ENCODE measurements at regions of chr2 and their contacts with region 1.

Region 1: DNA sequence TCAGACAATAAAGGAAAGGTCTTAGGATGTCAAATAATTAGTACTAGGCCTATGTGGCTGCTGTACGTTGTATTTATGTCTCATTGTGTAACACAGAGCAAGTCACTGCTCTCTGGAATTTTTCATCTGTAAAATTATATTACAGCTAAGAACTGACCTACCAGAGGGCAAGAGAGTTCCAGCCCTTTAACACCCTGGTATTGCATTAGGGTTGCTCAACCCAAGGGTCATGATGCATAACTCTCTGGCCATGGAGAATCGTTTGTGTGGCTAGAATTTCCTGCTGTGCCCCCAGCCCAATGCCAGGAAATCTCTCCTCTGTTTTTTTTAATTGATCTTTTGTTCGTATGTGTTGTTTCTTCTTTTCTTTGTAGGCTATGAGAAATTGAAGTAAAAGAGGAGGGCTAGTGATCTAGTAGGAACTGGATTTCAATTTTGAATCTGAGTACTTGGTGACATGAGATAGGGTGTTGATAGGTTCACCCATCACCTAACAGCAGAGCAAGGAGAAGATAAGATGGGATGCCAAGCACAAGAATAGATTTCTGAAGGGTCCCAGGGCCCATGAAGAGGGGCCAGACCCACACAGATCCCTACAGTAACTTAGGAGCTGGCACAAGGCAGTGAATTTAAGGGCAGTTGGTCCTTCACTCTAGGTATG is 571.2 kb upstream of the TNP1 start:
- DNase-seq: no peak
- H3K4me3 ChIP-seq: no peak overlapping the region
- H3K27ac ChIP-seq: no peak overlapping the region
- H3K4me1 ChIP-seq: peaks cover 33% of the 10 kb centered on the region
- H3K27me3 ChIP-seq: no peaks in the 10 kb centered on the region
- CTCF ChIP-seq: no peak

Region 2: DNA sequence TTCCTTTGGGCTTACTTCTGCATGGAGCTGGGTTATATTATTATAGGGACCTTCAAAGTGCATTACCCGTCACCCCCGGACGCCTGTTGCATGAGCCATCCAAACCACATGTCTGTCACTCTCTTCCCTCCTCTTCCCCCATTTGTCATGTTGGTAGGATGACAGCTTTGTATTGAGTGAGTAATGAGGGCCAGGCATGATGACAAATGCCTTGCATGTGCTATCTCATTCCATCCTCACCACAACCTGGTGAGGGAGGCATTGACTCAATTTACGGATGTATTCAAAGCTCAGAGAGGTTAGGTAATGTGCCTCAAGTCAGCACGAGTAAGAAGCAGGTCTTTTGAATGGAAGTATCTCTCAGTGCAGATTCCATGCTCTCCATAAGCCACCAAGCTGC is 60.7 kb before region 1 on chr2:
- CTCF ChIA-PET with region 1: no interaction called
- dilution Hi-C with region 1: no loop called
- in situ Hi-C with region 1: no loop called
- intact Hi-C with region 1: loop called (anchors 2 kb)
- DNase-seq: peak; percentile 96
- H3K4me3 ChIP-seq: no peak overlapping the region
- H3K27ac ChIP-seq: no peak overlapping the region
- H3K4me1 ChIP-seq: peaks cover 37% of the 10 kb centered on the region
- H3K27me3 ChIP-seq: no peaks in the 10 kb centered on the region
- CTCF ChIP-seq: peak; percentile 16 to 51

Region 3: DNA sequence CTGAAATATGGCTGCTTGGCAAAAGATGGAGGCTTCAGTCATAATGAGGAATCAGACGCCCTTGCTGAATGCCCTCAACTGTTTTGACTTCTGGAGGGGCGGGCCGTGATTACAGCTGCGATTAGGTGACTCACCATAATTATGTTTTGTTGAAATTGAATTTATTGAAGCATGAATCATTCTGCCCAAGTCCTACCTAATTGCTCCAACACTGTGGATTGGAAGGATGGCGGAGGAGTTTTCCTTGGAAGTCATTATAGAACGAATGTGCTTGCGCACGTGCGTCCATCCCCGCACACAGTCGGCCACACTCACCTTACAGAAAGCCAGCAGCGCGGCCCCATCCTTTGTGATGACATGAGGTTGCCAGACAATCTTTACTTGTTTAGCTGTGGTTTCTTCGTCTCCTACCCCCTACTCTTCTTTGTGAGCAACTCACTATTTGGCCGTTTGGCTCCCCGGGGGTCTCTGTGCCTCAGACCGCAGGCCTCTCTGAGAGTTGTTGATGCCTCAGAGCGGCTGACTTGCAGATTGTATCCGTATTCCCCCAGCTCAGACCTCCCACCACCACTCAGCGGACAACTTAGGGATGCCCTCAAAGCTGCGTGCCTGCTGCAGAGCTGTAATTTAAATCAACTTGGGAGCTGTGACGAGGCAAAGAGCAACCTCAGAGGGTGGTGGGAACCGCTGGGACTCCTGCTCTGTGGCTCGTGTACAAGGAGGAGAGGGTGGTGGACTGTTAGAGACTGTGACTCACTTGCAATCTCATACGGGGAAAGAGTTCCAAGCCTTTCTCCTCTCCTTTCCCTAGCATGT is 58.3 kb after region 1 on chr2:
- CTCF ChIA-PET with region 1: no interaction called
- dilution Hi-C with region 1: no loop called
- in situ Hi-C with region 1: no loop called
- intact Hi-C with region 1: no loop called
- DNase-seq: peak; percentile 64
- H3K4me3 ChIP-seq: no peak overlapping the region
- H3K27ac ChIP-seq: no peak overlapping the region
- H3K4me1 ChIP-seq: no peaks in the 10 kb centered on the region
- H3K27me3 ChIP-seq: no peaks in the 10 kb centered on the region
- CTCF ChIP-seq: no peak

Region 4: GRCh38 chr2:217551252-217551899 is 120.3 kb after region 1 on chr2:
- CTCF ChIA-PET with region 1: no interaction called
- dilution Hi-C with region 1: no loop called
- in situ Hi-C with region 1: no loop called
- intact Hi-C with region 1: no loop called
- DNase-seq: peak; percentile 11
- H3K4me3 ChIP-seq: no peak overlapping the region
- H3K27ac ChIP-seq: no peak overlapping the region
- H3K4me1 ChIP-seq: peaks cover 7% of the 10 kb centered on the region
- H3K27me3 ChIP-seq: no peaks in the 10 kb centered on the region
- CTCF ChIP-seq: no peak